Activated B cell treated with CpG ODN at 0.5 μM for 24 hours (primary cell): ENCODE measurements at regions of chr9 and their contacts with region 1.

Region 1: DNA sequence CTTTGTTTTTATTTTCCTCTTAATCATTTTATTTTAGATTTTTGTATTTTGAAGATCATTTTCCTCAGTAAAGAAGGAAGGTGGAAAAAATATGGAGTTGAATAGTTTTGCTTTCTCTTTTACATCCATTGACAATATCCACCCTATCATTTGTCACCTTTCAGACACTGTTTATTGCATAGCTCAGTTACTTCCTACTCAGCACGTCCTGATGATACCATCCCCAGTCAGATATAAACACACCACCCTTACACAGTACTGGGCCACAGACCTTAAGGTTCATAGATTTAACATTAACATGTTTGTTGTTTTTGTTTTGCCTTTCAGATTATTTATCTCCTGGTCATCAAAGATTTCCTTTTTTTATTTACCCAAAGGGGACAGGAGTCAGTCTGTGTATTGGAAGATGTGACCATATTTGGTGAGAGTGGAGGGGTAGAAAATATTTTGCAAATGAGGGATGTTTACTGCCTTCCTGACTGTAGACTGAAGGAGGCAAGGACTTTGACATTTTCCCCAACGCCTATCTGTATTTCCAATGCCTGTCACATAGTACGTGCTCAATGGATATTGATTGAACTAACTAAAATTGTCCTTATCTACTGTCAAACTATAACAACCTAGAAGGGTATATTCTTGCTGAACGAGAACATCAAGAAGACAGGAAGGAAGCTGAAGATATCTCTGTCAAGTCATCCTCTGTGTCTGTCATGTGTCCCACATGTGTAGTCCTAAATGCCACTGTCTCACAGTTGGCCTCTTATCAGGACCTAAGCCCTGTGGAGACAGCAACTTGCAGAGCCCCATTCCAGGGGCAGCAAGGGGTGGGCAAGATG is 15.6 kb downstream of the STX17 start:
- DNase-seq: no peak
- ATAC-seq: no peak
- H3K4me3 Mint-ChIP-seq: no peak overlapping the region
- H3K27ac Mint-ChIP-seq: no peak overlapping the region
- H3K4me1 Mint-ChIP-seq: no peaks in the 10 kb centered on the region
- H3K27me3 Mint-ChIP-seq: no peaks in the 10 kb centered on the region
- CTCF ChIP-seq: no peak

Region 2: GRCh38 chr9:99889121-99889520 is 33.0 kb before region 1 on chr9:
- CTCF ChIA-PET with region 1: no interaction called
- POLR2A ChIA-PET with region 1: no interaction called
- intact Hi-C with region 1: loop called (anchors 5 kb)
- DNase-seq: no peak
- ATAC-seq: no peak
- H3K4me3 Mint-ChIP-seq: no peak overlapping the region
- H3K27ac Mint-ChIP-seq: no peak overlapping the region
- H3K4me1 Mint-ChIP-seq: no peaks in the 10 kb centered on the region
- H3K27me3 Mint-ChIP-seq: no peaks in the 10 kb centered on the region
- CTCF ChIP-seq: no peak

Region 3: DNA sequence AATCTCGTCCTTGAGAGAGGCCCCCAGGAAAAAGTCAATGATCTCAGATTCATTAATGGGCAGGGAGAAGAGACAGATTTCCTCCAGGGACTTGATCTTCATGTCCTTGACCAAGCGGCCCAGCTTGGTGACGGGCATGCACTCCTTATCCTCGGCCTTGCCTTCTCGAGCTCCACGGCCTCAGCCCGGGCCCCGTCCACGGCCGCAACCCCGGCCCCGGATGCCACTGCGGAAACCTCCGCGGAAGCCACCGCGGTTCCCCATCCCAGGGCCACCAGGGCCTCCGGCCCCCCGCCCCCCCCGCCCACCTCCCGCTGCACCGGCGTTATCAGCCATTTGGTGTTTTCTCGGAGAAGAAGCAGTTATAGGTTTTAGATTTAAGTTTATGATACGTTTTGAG is 195.2 kb after region 1 on chr9:
- CTCF ChIA-PET with region 1: no interaction called
- POLR2A ChIA-PET with region 1: no interaction called
- intact Hi-C with region 1: loop called (anchors 5 kb)
- DNase-seq: no peak
- ATAC-seq: no peak
- H3K4me3 Mint-ChIP-seq: no peak overlapping the region
- H3K27ac Mint-ChIP-seq: no peak overlapping the region
- H3K4me1 Mint-ChIP-seq: no peaks in the 10 kb centered on the region
- H3K27me3 Mint-ChIP-seq: no peaks in the 10 kb centered on the region
- CTCF ChIP-seq: no peak